RWPE1 (cell line): ENCODE measurements at regions of chr1 and their contacts with region 1.

Region 1: DNA sequence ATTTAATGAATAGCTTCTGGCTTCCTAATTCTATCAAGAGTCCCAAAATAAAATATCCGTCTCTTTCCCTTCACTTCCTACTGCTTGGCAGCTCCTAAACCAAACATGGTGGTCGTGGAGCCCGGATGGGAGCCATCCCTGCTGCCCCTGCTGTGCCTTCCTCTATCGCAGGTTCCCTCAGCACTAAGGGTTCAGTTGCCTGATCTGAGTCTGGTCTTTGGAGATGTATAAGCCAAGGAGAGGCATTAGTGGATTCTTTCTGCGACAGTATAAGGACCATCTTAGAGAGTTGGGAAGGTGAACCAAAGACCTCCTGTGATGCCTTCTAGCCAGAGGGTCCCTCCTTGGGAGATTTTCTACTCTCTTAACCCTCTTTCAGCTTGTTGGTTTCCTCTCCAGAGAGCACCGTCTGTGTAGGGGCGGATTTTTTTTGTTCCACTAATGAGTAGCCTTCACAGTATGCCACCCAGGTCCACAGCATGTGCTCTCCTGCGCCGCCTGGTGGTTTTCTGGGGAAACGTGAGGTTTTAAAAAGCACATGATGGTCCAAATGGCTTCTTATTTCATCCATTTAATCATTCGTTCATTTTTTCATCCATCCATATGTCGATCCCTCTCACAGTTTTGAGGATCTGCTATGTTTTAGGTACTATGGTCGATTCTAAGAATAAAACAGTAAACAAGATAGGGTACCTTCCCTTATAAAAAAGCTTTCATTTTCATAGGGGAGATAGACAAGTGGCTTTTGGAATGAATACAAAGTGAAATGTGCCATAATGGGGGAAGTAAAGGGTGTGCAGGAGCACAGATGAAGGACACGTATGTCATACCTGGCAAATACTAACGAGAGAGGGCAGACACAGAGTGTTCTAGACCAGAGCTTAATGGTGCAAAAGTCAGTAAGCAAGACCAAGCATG is 71.0 kb downstream of the NFASC start:
- DNase-seq: peak; percentile 75
- H3K27ac ChIP-seq: no peak overlapping the region
- CTCF ChIP-seq: peak; percentile 87

Region 2: DNA sequence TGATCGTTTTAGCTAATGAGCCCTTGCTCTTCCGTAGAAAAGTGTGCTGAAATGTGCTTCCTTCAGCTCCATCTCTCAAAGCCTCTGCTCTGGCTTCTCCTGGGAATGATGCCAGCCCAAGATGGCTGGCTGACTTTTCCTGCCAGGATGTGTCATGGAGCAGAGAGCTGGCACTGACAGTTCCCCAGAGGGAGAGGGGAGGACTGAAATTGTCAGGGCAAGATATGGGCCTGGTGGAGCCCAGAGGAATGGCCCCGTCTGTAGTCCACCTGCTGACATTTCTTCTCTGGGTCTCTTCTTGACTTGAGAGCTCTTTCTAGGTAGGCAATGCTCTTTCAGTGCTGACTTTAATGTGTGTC is 556.7 kb before region 1 on chr1:
- CTCF ChIA-PET with region 1: no interaction called
- POLR2A ChIA-PET with region 1: no interaction called
- DNase-seq: peak; percentile 51
- H3K27ac ChIP-seq: peak overlapping the region; percentile 59
- CTCF ChIP-seq: no peak

Region 3: GRCh38 chr1:204819495-204819894 is 122.2 kb before region 1 on chr1:
- CTCF ChIA-PET with region 1: interaction called, 11 read pairs
- POLR2A ChIA-PET with region 1: no interaction called
- DNase-seq: no peak
- H3K27ac ChIP-seq: no peak overlapping the region
- CTCF ChIP-seq: no peak

Region 4: DNA sequence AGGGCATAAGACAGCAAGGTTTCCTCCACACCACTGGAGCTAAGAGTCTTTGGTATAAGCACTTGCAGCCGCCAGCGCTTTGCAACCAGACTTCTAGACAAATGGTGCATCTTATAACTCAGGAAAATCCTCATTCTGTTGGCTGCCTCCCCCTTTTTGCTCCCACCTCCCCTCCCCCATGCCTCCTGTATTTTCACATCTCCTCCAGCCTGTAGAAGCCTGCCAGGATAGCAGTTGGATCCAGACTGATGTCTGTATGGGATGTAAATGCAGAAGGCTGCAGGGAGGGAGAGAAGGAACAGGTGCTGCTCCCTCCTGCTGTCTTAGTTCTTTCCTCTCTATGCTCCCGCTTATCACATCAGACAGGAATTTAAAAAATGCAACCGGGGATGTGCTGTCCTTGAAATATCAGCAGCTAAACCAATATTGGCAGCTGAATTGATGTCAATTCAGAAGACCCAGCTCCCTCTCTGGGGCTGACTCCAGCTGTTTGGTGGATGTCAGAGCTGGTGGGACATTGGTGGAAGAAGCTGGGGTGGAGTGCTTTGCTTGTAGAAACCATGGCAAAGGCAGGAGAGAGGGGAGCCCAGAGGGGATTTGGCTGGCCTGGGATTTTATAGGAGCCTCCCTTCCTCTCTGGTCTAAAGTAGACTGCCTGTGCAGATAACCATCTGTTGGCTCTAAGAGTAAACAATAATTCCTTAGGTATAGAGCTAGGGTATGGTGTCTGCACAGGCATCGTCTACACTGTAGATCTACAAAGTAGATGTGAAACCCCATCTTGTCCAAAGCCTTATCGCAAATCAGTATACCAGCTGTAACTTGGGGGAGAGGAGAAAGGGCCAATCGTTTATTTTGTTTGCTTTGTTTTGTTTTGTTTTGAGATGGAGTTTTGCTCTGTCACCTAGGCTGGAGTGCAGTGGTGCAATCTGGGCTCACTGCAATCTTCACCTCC is 17.4 kb before region 1 on chr1:
- CTCF ChIA-PET with region 1: interaction called, 15 read pairs
- POLR2A ChIA-PET with region 1: no interaction called
- DNase-seq: peak; percentile 44
- H3K27ac ChIP-seq: no peak overlapping the region
- CTCF ChIP-seq: no peak

Region 5: GRCh38 chr1:205183676-205184335 is 242.1 kb after region 1 on chr1:
- CTCF ChIA-PET with region 1: no interaction called
- POLR2A ChIA-PET with region 1: no interaction called
- DNase-seq: no peak
- H3K27ac ChIP-seq: no peak overlapping the region
- CTCF ChIP-seq: no peak